ENCODE measurements at regions of chr1 and their contacts with region 1.

Region 1: GRCh38 chr1:234842726-234843641 is 233.0 kb upstream of the IRF2BP2 start:
- DNase-seq: peak; percentile 95
- H3K4me3 Mint-ChIP-seq: peak overlapping the region; percentile 62
- H3K27ac Mint-ChIP-seq: peak overlapping the region; percentile 96
- H3K4me1 Mint-ChIP-seq: peaks cover 85% of the 10 kb centered on the region
- H3K27me3 Mint-ChIP-seq: no peaks in the 10 kb centered on the region

Region 2: GRCh38 chr1:234486498-234487448 is 356.2 kb before region 1 on chr1:
- CTCF ChIA-PET with region 1: no interaction called
- intact Hi-C with region 1: loop called (anchors 1 kb)
- DNase-seq: peak; percentile 66
- H3K4me3 Mint-ChIP-seq: no peak overlapping the region
- H3K27ac Mint-ChIP-seq: peak overlapping the region; percentile 91
- H3K4me1 Mint-ChIP-seq: peaks cover 41% of the 10 kb centered on the region
- H3K27me3 Mint-ChIP-seq: peaks cover 12% of the 10 kb centered on the region

Region 3: DNA sequence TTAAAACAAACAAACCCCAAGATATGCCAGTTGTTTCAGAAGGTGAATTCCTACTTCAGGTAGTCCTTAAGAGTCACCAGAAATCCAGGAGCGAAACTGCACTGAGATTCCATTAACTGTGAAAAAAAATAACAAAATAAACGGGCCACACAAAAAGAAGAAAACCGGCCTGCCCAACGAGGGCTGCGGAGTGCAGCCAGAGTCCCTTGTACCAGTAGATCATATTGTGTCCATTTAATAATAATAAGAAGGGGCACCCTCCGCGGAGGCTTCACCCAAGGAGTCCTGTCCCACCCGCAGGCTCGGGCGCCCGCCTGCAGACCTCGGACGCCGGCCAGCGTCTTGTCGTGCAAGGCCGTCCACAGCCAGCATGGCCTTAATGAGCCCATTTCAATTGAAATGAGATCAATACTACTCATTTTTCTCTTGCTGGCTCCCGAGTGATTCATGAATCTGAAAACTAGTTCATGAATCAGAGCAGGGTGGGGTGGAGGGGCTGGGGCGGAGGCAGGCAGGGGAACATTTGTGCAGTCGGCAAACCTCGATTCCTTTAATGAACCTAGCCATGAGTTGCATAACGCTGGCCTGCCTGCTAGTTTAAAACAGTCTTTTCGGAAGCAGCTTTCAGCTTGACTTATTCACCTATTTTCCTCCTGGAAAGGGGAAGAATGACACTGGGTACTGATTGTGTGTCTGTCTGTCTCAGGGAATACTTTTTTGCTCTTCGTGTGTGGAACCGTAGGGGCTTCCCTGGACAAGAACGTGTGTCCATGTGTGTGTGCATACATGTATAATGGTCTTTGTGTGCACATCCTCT is 119.9 kb before region 1 on chr1:
- CTCF ChIA-PET with region 1: interaction called, 4 read pairs
- intact Hi-C with region 1: loop called (anchors 1 kb)
- DNase-seq: peak; percentile 91
- H3K4me3 Mint-ChIP-seq: peak overlapping the region; percentile 70
- H3K27ac Mint-ChIP-seq: peak overlapping the region; percentile 97
- H3K4me1 Mint-ChIP-seq: peaks cover 61% of the 10 kb centered on the region
- H3K27me3 Mint-ChIP-seq: no peaks in the 10 kb centered on the region

Region 4: GRCh38 chr1:234881893-234882771 is 39.1 kb after region 1 on chr1:
- CTCF ChIA-PET with region 1: no interaction called
- intact Hi-C with region 1: loop called (anchors 1 kb)
- DNase-seq: peak; percentile 40
- H3K4me3 Mint-ChIP-seq: no peak overlapping the region
- H3K27ac Mint-ChIP-seq: peak overlapping the region; percentile 33
- H3K4me1 Mint-ChIP-seq: peaks cover 37% of the 10 kb centered on the region
- H3K27me3 Mint-ChIP-seq: no peaks in the 10 kb centered on the region

Region 5: GRCh38 chr1:234963180-234963903 is 120.4 kb after region 1 on chr1:
- CTCF ChIA-PET with region 1: no interaction called
- intact Hi-C with region 1: loop called (anchors 1 kb)
- DNase-seq: peak; percentile 98
- H3K4me3 Mint-ChIP-seq: peak overlapping the region; percentile 35
- H3K27ac Mint-ChIP-seq: peak overlapping the region; percentile 97
- H3K4me1 Mint-ChIP-seq: peaks cover 72% of the 10 kb centered on the region
- H3K27me3 Mint-ChIP-seq: no peaks in the 10 kb centered on the region